ENCODE measurements at regions of chr7 and their contacts with region 1.

Region 1: GRCh38 chr7:108094933-108095710 is 35.0 kb downstream of the LAMB4 start:
- DNase-seq: peak in 2 of 3 donors; percentile 47 to 73
- ATAC-seq: peak; percentile 97
- H3K4me3 ChIP-seq: no peak overlapping the region
- H3K4me1 ChIP-seq: peaks cover 15% of the 10 kb centered on the region
- CTCF ChIP-seq: no peak

Region 2: DNA sequence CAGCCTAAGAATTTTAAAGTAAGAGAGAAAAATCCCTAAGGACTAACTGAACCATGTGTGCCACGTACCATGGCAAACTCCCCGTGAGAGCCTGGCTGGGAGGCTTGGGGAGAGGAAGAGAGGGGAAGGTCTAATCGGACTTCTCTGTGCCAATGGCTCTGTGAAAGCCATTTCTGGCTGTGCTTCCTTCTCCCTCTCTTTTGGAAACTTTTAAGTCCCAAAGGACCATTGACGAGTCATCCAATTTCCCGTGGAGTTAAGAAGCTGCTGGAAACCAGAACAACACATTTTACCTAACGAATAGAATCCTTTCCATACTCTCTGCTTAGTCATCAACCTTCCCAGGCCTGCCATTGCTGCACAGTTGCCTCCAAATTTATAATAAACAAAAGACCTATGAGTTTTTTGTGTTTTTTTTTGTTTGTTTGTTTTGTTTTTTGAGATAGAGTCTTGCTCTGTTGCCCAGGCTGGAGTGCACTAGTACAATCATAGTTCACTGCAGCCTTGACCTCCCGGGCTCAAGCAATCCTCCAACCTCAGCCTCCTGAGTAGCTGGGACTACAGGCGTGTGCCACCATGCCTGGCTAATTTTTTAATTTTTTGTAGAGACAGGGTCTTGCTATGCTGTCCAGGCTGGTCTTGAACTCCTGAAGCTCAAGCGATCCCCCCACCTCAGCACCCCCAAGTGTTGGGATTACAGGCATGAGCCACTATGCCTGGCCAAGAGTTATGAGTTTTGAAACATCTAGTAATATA is 105.3 kb before region 1 on chr7:
- intact Hi-C with region 1: loop called in 1 of 2 experiments (anchors 5 kb)
- DNase-seq: no peak
- ATAC-seq: no peak
- H3K4me3 ChIP-seq: no peak overlapping the region
- H3K4me1 ChIP-seq: peaks cover 14% of the 10 kb centered on the region
- CTCF ChIP-seq: no peak

Region 3: GRCh38 chr7:108167460-108167859 is 72.3 kb after region 1 on chr7:
- intact Hi-C with region 1: no loop called
- DNase-seq: no peak
- ATAC-seq: peak; percentile 20
- H3K4me3 ChIP-seq: no peak overlapping the region
- H3K4me1 ChIP-seq: no peaks in the 10 kb centered on the region
- CTCF ChIP-seq: no peak

Region 4: GRCh38 chr7:108308903-108309302 is 213.8 kb after region 1 on chr7:
- intact Hi-C with region 1: no loop called
- DNase-seq: no peak
- ATAC-seq: no peak
- H3K4me3 ChIP-seq: no peak overlapping the region
- H3K4me1 ChIP-seq: no peaks in the 10 kb centered on the region
- CTCF ChIP-seq: no peak